Psoas muscle (tissue), 8 donors: ENCODE measurements at regions of chr11 and their contacts with region 1.

Region 1: GRCh38 chr11:77198440-77198849 is 70.4 kb downstream of the MYO7A start:
- DNase-seq: no peak
- ATAC-seq: no peak
- H3K4me3 ChIP-seq: no peak overlapping the region
- H3K27ac ChIP-seq: no peak overlapping the region
- H3K4me1 ChIP-seq: no peaks in the 10 kb centered on the region
- H3K27me3 ChIP-seq: no peaks in the 10 kb centered on the region
- CTCF ChIP-seq: no peak

Region 2: GRCh38 chr11:77223797-77224196 is 25.4 kb after region 1 on chr11:
- intact Hi-C with region 1: no loop called
- DNase-seq: no peak
- ATAC-seq: no peak
- H3K4me3 ChIP-seq: no peak overlapping the region
- H3K27ac ChIP-seq: no peak overlapping the region
- H3K4me1 ChIP-seq: no peaks in the 10 kb centered on the region
- H3K27me3 ChIP-seq: no peaks in the 10 kb centered on the region
- CTCF ChIP-seq: no peak

Region 3: GRCh38 chr11:77547863-77548551 is 349.6 kb after region 1 on chr11:
- intact Hi-C with region 1: loop called (anchors 2 to 5 kb)
- DNase-seq: no peak
- ATAC-seq: peak; percentile 44 to 84 (median 64)
- H3K4me3 ChIP-seq: no peak overlapping the region
- H3K27ac ChIP-seq: no peak overlapping the region
- H3K4me1 ChIP-seq: no peaks in the 10 kb centered on the region
- H3K27me3 ChIP-seq: no peaks in the 10 kb centered on the region
- CTCF ChIP-seq: peak; percentile 71